GM12878 (cell line): ENCODE measurements at regions of chr1 and their contacts with region 1.

Region 1: DNA sequence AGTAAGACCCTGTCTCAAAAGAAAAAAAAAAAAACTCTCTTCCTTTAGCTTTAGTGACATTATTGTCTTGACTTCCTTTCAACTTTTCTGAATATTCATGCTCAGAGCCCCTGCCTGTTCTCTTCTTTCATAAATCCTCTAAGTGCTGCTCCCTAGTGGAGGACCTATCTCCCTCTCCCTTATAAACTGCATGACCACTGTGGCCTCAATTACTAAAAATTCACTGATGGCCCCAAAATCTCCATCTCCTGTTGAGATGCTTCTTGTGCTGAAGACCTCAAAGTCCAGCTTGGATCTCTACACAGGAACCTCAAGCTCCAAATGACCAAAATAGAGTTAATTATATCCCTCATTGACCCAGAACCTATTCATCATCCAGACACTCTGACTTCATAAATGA is 7.8 kb downstream of the ITLN1 start:
- DNase-seq: no peak
- ATAC-seq: peak; percentile 75
- H3K4me3 ChIP-seq: no peak overlapping the region
- H3K27ac ChIP-seq: no peak overlapping the region
- H3K4me1 ChIP-seq: no peaks in the 10 kb centered on the region
- H3K27me3 ChIP-seq: no peaks in the 10 kb centered on the region
- CTCF ChIP-seq: peak; percentile 32 to 37 (median 37); a peak in 5 of 6 replicates
- EP300 ChIP-seq: no peak
- POLR2A ChIP-seq: no peak
- RAD21 ChIP-seq: peak; percentile 47

Region 2: GRCh38 chr1:160682983-160683865 is 194.0 kb before region 1 on chr1:
- CTCF ChIA-PET with region 1: no interaction called
- POLR2A ChIA-PET with region 1: no interaction called
- RAD21 ChIA-PET with region 1: no interaction called
- SMC1A ChIA-PET with region 1: no interaction called
- in situ Hi-C with region 1: no loop called
- intact Hi-C with region 1: no loop called
- DNase-seq: no peak
- ATAC-seq: peak; percentile 10; the same call in 2 of the 3 replicates
- H3K4me3 ChIP-seq: peak overlapping the region; percentile 21
- H3K27ac ChIP-seq: peak overlapping the region; percentile 62
- H3K4me1 ChIP-seq: peaks cover 33% of the 10 kb centered on the region
- H3K27me3 ChIP-seq: no peaks in the 10 kb centered on the region
- CTCF ChIP-seq: no peak
- EP300 ChIP-seq: no peak
- POLR2A ChIP-seq: no peak
- RAD21 ChIP-seq: no peak

Region 3: GRCh38 chr1:160862203-160863060 is 14.8 kb before region 1 on chr1 and contains the start of gene CD244:
- CTCF ChIA-PET with region 1: interaction called, 50 read pairs
- POLR2A ChIA-PET with region 1: interaction called, 10 read pairs
- RAD21 ChIA-PET with region 1: interaction called, 11 read pairs
- SMC1A ChIA-PET with region 1: interaction called, 27 read pairs
- in situ Hi-C with region 1: no loop called
- intact Hi-C with region 1: no loop called
- DNase-seq: peak; percentile 71
- ATAC-seq: peak; percentile 96
- H3K4me3 ChIP-seq: peak within 1 kb of the TSS; percentile 32; the same call in 1 of the 2 replicates
- H3K27ac ChIP-seq: no peak within 1 kb of the TSS
- H3K4me1 ChIP-seq: peaks cover 15% of the 10 kb centered on the region
- H3K27me3 ChIP-seq: no peaks in the 10 kb centered on the region
- CTCF ChIP-seq: no peak
- EP300 ChIP-seq: peak in 1 of 2 experiments; percentile 60; a peak in 1 of 4 replicates
- POLR2A ChIP-seq: peak; percentile 56
- RAD21 ChIP-seq: no peak
- polyA plus RNA-seq, gene CD244: 0.24 to 0.37 TPM